Activated CD4-positive, alpha-beta T cell treated with anti-CD3 and anti-CD28 coated beads, Interleukin-2, amount 10 ng/mL, durations not matched to agents 24 days and 14 days (primary cell): ENCODE measurements at regions of chr13 and their contacts with region 1.

Region 1: GRCh38 chr13:23579072-23579895 is 9.1 kb downstream of the TNFRSF19 start:
- DNase-seq: peak; percentile 98
- H3K4me3 Mint-ChIP-seq: peak overlapping the region; percentile 76
- H3K27ac Mint-ChIP-seq: no peak overlapping the region
- H3K4me1 Mint-ChIP-seq: peaks cover 18% of the 10 kb centered on the region
- H3K27me3 Mint-ChIP-seq: peaks cover 60% of the 10 kb centered on the region

Region 2: GRCh38 chr13:23466144-23467002 is 112.9 kb before region 1 on chr13:
- intact Hi-C with region 1: loop called (anchors 10 kb)
- DNase-seq: peak; percentile 85
- H3K4me3 Mint-ChIP-seq: peak overlapping the region; percentile 72
- H3K27ac Mint-ChIP-seq: peak overlapping the region; percentile 35
- H3K4me1 Mint-ChIP-seq: peaks cover 5% of the 10 kb centered on the region
- H3K27me3 Mint-ChIP-seq: peaks cover 34% of the 10 kb centered on the region

Region 3: GRCh38 chr13:23695711-23696464 is 116.6 kb after region 1 on chr13:
- intact Hi-C with region 1: loop called (anchors 5 kb)
- DNase-seq: peak; percentile 85
- H3K4me3 Mint-ChIP-seq: peak overlapping the region; percentile 80
- H3K27ac Mint-ChIP-seq: peak overlapping the region; percentile 91
- H3K4me1 Mint-ChIP-seq: peaks cover 10% of the 10 kb centered on the region
- H3K27me3 Mint-ChIP-seq: peaks cover 3% of the 10 kb centered on the region

Region 4: DNA sequence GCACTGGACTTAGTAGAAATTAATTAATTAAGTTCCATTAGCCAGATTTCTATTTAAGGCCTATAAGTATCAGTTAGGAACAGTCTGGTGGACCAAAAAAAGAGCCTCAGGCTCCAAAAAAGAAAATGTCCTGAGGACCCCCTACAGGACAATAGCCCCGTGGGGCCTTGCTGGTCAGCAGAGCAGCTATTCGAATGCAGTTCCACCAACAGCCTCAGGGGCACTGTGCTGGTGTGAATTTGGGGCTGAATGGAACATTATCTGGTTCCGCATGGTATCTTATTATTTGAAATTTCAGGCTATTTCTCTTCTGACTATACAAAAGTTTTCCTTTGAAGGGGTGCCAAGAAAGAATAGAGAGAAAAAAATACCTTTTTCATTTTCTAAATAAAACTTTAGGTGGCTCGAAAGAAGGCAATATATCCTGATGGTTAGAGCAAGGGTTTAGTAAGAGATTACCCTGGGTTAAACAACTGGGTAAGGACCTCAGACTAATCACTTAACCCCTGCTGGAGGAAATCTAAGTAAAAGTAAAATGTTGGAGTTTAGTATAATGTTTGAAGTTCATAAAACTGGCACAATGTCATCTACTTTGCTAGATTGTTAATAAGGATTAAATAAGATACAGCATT is 162.7 kb after region 1 on chr13:
- intact Hi-C with region 1: loop called (anchors 10 kb)
- DNase-seq: no peak
- H3K4me3 Mint-ChIP-seq: no peak overlapping the region
- H3K27ac Mint-ChIP-seq: no peak overlapping the region
- H3K4me1 Mint-ChIP-seq: peaks cover 19% of the 10 kb centered on the region
- H3K27me3 Mint-ChIP-seq: peaks cover 26% of the 10 kb centered on the region

Region 5: DNA sequence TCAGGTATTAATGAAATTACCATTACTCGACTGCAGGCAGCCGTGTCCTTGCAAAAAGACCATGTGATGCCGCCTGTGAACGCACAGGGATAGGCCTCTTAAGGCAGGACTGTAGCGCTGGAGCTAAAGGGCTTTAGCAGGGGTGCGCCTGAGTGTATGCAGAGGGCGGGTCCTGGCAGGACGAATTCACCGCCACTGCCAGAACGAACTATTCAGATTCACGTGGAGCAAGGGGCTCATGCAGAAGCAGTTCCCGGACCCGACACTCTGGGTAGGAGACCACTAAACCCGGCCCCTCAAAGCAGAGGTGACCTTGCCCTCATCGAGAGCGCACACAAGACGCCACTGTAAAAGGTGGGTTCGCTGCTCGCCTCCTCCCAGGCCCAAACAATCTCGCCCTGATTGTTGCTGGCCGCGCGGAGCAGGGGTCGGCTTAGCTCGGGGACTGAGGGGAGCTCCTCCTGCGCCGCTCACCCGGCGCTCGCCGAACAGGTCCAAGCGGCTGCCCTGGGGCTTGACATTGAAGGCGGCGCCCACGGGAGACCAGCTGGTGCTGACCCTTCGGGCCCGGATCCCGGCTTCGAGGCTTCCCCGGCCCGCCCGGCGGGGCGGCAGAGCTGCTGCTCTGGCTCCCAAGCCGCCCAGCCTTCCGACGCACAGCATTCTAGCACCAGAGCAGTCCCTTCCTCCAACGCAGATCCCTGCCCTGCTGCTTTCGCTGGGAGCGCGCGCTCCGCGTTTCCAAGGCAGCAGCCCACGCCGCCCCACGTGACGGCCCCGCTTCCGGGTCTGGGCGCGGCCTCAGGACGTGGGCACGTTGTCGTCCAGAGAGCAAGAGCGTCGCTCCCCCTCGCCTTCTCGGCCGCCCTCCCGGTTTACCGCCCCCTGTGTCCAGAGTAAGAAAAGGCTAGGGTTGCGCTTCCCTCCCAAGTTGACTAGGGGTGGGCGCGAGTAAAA is 309.7 kb after region 1 on chr13 and contains the start of gene MIPEP:
- intact Hi-C with region 1: loop called (anchors 2 kb)
- DNase-seq: peak; percentile 97
- H3K4me3 Mint-ChIP-seq: peak within 1 kb of the TSS; percentile 88
- H3K27ac Mint-ChIP-seq: peak within 1 kb of the TSS; percentile 82
- H3K4me1 Mint-ChIP-seq: peaks cover 22% of the 10 kb centered on the region
- H3K27me3 Mint-ChIP-seq: no peaks in the 10 kb centered on the region
- total RNA-seq, gene MIPEP: 10.4 and 10.9 TPM in 2 replicates